ENCODE measurements at regions of chr14 and their contacts with region 1.

Region 1: GRCh38 chr14:96100161-96101029 is 61.2 kb downstream of the C14orf132 start:
- DNase-seq: peak; percentile 82 to 87
- ATAC-seq: peak; percentile 17 to 65; a peak in 4 of 6 replicates
- H3K4me3 ChIP-seq: no peak overlapping the region
- H3K27ac ChIP-seq: peak overlapping the region; percentile 86 to 88; a peak in 5 of 6 replicates
- H3K4me1 ChIP-seq: peaks cover 58% of the 10 kb centered on the region
- CTCF ChIP-seq: peak; percentile 100
- EP300 ChIP-seq: no peak
- POLR2A ChIP-seq: no peak
- RAD21 ChIP-seq: peak; percentile 100

Region 2: DNA sequence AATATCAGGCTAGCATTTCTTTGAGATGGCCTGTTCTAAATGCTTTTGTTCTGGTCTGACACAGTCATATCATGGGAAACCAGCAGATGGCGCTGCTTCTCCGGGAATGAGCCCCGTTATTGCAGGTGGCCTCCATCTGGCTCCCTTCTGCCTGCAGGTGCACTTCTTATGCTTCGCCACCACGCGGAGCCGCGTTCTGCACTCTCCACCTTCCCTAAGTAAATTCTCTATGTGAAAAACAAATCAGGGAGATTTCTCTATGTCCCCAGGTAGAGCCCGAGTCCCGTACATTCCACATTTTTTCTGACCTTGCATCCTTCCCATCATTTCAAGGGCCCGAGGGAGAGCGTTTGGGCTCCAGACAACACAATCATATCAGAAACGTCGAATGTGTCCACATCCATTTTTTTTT is 539.4 kb before region 1 on chr14:
- CTCF ChIA-PET with region 1: interaction called, 37 read pairs
- POLR2A ChIA-PET with region 1: no interaction called
- DNase-seq: peak; percentile 78 to 88
- ATAC-seq: peak; percentile 98 to 99
- H3K4me3 ChIP-seq: no peak overlapping the region
- H3K27ac ChIP-seq: no peak overlapping the region
- H3K4me1 ChIP-seq: no peaks in the 10 kb centered on the region
- CTCF ChIP-seq: peak; percentile 98
- EP300 ChIP-seq: no peak
- POLR2A ChIP-seq: no peak
- RAD21 ChIP-seq: peak; percentile 98

Region 3: DNA sequence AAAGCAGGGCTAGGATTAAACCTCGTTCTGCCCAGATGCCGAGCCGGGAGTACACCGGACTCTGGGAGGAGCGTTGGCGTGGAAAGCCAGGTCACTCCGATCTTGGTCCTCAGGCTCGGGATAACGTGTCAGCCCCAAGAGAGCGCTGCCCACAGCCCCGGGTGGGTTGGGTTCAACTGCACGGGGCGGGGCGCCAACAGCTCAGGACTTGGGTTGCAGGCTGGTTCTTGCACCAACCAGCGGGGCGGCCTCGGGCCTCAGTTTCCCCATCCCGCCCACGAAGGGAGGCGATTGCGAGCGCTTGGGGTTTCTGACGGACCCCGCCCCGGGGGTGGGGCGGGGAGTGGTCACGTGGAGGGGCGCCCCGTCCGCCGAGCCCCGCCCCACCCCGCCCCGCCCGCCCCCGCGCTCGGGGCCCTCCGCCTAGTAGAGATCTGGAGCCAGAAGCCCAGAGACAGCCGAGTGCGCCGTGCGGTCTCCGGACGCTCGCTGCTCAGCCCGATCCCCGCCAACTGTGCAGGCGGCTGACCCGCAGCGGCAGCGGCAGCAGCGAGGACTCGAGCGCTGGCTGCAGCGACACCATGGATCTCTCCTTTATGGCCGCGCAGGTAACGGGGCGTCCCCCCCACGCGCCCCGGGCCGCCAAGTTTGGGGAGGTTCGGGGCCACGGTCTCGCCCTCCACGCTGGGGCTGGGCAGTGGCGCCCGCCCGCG is 61.3 kb before region 1 on chr14 and contains the start of gene C14orf132:
- CTCF ChIA-PET with region 1: interaction called, 10 read pairs
- POLR2A ChIA-PET with region 1: no interaction called
- DNase-seq: peak; percentile 30 to 52
- ATAC-seq: peak; percentile 83 to 91
- H3K4me3 ChIP-seq: peak within 1 kb of the TSS; percentile 87
- H3K27ac ChIP-seq: peak within 1 kb of the TSS; percentile 84 to 92
- H3K4me1 ChIP-seq: peaks cover 16% of the 10 kb centered on the region; the same call in 2 of the 3 replicates
- CTCF ChIP-seq: no peak
- EP300 ChIP-seq: no peak
- POLR2A ChIP-seq: peak; percentile 57
- RAD21 ChIP-seq: no peak
- polyA plus RNA-seq, gene C14orf132: 4.6 and 5.4 TPM in 2 replicates

Region 4: DNA sequence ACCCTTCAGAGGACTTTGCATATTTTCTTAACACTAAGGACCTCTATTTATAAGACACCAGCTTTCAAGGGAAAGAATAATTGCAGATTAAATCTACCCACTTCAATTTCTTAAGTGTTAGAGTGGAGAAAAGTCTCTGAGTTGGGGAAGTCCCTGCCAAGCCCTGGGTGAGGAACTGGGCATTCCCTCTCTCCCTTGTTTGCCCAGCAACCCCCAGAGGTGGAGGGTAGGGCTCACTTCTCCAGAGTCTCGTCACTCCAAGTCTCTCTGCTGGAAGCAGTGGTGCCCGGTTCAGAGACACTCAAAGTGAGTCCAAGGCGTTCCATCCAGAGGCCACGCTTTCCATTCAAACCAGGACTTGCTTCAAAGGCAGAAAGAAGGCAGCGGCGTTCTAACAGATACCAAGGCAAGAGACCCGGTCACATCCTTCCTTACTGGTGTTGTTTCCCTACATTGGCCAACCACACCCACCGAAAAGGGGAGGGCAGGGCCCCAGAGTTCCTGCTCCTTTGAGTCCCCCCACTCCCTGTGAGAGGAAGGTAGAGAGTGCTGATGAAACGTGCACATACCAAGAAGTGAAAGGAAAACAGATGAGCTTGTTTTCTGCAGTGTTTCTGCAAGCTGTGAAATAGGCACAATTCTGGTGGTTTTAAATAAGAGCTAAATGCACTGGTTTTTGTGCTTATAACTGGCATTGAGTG is 98.2 kb after region 1 on chr14:
- CTCF ChIA-PET with region 1: interaction called, 12 read pairs
- POLR2A ChIA-PET with region 1: no interaction called
- DNase-seq: no peak
- ATAC-seq: peak; percentile 45 to 57; a peak in 5 of 6 replicates
- H3K4me3 ChIP-seq: no peak overlapping the region
- H3K27ac ChIP-seq: peak overlapping the region; percentile 60 to 87
- H3K4me1 ChIP-seq: peaks cover 53% of the 10 kb centered on the region
- CTCF ChIP-seq: no peak
- EP300 ChIP-seq: no peak
- POLR2A ChIP-seq: no peak
- RAD21 ChIP-seq: no peak

Region 5: GRCh38 chr14:96246535-96246839 is 146.1 kb after region 1 on chr14:
- CTCF ChIA-PET with region 1: interaction called, 21 read pairs
- POLR2A ChIA-PET with region 1: no interaction called
- DNase-seq: peak; percentile 82 to 91
- ATAC-seq: peak; percentile 93 to 96
- H3K4me3 ChIP-seq: no peak overlapping the region
- H3K27ac ChIP-seq: peak overlapping the region; percentile 76 to 91
- H3K4me1 ChIP-seq: peaks cover 44% of the 10 kb centered on the region
- CTCF ChIP-seq: no peak
- EP300 ChIP-seq: peak; percentile 42 to 63; a peak in 2 of 5 replicates
- POLR2A ChIP-seq: no peak
- RAD21 ChIP-seq: peak in 1 of 2 experiments; percentile 29; a peak in 2 of 5 replicates

Region 6: DNA sequence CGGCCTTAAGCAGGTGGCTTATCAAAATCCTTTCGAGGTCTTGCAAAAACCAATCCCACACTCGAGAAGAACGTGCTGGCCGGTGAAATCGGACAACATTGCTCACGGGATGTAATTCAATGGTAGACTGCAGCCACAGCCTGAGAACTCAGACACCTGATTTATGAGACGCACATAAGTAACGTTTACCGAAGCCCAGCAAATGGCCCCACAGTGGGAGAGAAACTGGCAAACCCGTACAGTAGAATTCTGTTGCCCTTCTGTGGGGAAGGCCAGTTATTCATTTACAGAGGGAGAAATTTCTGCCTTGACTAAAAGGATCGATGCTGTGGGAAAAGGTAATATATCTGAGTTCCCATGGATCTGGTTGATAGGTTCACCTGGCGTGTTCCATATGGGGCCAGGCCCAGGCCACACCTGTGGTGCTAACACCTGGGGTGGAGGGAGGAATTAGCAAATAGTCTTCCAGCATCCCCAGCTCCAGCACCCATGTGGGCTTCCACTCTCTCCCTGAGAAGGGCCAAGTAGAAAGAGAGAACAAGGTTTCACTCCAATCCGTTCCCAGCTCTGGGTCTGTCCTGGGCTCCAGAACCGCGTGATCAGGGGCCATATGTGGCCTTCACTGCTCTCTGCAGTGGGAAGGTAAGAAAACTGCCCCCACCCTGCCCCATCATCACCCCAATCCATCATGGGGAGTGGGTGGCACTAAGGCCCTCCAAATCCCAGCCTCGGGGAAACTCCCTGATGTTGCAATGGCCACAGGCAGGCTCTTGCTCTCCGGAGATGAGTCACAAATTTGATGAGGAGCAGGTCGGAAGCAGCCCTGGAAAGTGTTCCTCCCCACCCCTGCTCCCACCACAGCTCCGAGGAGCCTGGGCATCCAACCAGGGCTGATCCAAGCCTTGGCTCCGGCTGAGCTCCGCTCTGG is 168.3 kb after region 1 on chr14:
- CTCF ChIA-PET with region 1: interaction called, 486 read pairs
- POLR2A ChIA-PET with region 1: no interaction called
- DNase-seq: peak; percentile 78 to 82
- ATAC-seq: peak; percentile 85 to 90
- H3K4me3 ChIP-seq: 0 out of 3 replicates have a peak overlapping the region, but pooled peaks have one; percentile 2
- H3K27ac ChIP-seq: peak overlapping the region; percentile 82 to 92
- H3K4me1 ChIP-seq: peaks cover 44% of the 10 kb centered on the region
- CTCF ChIP-seq: no peak
- EP300 ChIP-seq: peak; percentile 70 to 80; a peak in 2 of 5 replicates
- POLR2A ChIP-seq: no peak
- RAD21 ChIP-seq: no peak

Region 7: DNA sequence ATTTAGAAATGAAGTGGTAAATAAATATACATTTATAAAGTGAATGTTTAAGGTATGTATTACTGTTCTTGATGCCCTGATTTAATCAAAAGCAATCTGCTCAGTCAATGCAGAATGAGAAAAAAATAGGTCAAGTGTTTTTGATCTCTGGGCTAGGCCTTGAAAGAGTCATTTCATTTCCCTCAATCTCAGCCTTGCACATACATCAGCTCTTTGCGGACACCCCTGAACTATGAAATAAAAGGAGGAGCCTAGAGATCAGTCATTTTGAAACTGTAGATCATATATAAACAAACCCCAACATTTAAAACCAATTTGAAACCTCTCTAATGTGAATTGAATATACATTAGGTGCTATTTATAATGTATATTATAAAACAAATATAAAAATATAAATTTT is 220.2 kb after region 1 on chr14:
- CTCF ChIA-PET with region 1: no interaction called
- POLR2A ChIA-PET with region 1: no interaction called
- DNase-seq: no peak
- ATAC-seq: no peak
- H3K4me3 ChIP-seq: no peak overlapping the region
- H3K27ac ChIP-seq: no peak overlapping the region
- H3K4me1 ChIP-seq: no peaks in the 10 kb centered on the region
- CTCF ChIP-seq: no peak
- EP300 ChIP-seq: no peak
- POLR2A ChIP-seq: no peak
- RAD21 ChIP-seq: no peak

Region 8: GRCh38 chr14:96424109-96424989 is 324.0 kb after region 1 on chr14:
- CTCF ChIA-PET with region 1: interaction called, 28 read pairs
- POLR2A ChIA-PET with region 1: no interaction called
- DNase-seq: peak; percentile 57 to 74
- ATAC-seq: peak; percentile 90 to 93
- H3K4me3 ChIP-seq: peak overlapping the region; percentile 41
- H3K27ac ChIP-seq: peak overlapping the region; percentile 22 to 75; a peak in 3 of 6 replicates
- H3K4me1 ChIP-seq: no peaks in the 10 kb centered on the region
- CTCF ChIP-seq: peak; percentile 90
- EP300 ChIP-seq: no peak
- POLR2A ChIP-seq: no peak
- RAD21 ChIP-seq: peak; percentile 92 to 94

Measured in A549 (cell line).